Activated naive CD4-positive, alpha-beta T cell treated with anti-CD3 and anti-CD28 coated beads for 36 hours (primary cell): ENCODE measurements at regions of chr6 and their contacts with region 1.

Region 1: GRCh38 chr6:26568601-26569432 is 27.9 kb upstream of the ABT1 start:
- DNase-seq: peak; percentile 99
- H3K4me3 Mint-ChIP-seq: peak overlapping the region; percentile 95
- H3K27ac Mint-ChIP-seq: peak overlapping the region; percentile 91
- H3K4me1 Mint-ChIP-seq: peaks cover 33% of the 10 kb centered on the region
- H3K27me3 Mint-ChIP-seq: peaks cover 4% of the 10 kb centered on the region

Region 2: DNA sequence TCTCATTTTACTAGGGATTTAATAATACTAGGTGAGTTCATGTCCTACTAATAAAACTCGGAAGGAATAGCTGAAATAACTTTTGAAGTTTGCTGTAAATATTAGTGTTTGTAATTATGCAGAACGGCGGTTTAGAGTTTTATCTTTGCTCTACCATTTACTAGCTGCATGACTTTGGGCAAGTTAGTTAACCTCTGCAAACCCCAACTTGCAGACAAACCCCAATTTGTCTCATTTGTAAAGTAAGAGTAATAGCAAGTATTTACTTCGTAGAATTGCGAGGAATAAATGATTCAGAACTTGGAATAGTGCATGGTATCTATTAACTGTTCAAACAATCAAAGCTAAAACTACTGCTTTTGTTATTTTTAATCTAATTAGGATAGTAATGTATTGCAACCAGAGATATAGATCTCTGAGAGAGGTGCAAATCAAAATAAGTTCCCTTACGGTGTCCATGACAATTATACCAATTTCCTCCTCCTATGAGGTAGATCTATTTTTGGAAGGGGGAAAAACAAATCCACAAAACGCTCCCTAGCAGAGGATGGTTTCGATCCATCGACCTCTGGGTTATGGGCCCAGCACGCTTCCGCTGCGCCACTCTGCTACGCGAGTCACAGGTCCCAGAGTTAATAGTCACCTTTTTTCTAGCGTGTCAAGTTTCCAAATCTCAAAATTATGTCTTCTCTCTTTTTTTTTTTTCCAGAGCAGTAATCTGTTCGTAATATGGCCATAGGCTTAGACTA is 238.9 kb before region 1 on chr6:
- CTCF ChIA-PET with region 1: interaction called, 6 read pairs
- intact Hi-C with region 1: loop called (anchors 2 kb)
- DNase-seq: peak; percentile 81
- H3K4me3 Mint-ChIP-seq: peak overlapping the region; percentile 82
- H3K27ac Mint-ChIP-seq: peak overlapping the region; percentile 90
- H3K4me1 Mint-ChIP-seq: peaks cover 35% of the 10 kb centered on the region
- H3K27me3 Mint-ChIP-seq: peaks cover 28% of the 10 kb centered on the region

Region 3: DNA sequence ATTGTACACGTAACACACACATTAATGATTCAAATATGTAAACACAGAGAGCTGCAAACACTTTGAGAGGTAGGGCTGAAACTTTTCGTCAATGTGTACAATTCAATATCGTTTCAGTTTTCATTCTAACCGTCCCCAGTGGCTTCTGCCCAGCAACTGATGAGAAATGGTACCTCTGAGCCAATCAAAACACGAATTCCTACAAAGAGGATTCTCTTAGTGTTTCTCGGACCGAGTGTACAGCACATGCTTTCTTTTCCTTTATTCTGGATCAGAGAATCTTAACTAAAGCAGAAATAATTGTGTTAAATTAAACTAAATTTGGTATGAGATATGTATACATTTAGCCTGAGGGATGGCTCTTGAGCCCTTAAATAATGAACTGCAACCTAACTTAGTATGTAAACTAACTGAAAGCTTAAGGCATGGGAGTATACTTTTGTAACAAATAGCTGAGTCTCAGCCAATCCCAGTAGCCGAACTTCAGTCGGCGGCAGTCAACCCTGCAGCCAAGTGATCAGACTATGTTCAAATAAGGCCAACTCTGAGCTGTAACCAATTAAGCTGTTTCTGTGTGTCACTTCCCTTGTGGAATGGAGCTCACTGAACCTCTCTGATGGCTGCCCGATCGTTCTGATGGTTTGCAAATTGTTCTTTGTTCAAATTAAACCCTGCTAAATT is 94.9 kb before region 1 on chr6:
- CTCF ChIA-PET with region 1: interaction called, 4 read pairs
- intact Hi-C with region 1: loop called (anchors 1 kb)
- DNase-seq: peak; percentile 90
- H3K4me3 Mint-ChIP-seq: peak overlapping the region; percentile 98
- H3K27ac Mint-ChIP-seq: peak overlapping the region; percentile 100
- H3K4me1 Mint-ChIP-seq: peaks cover 40% of the 10 kb centered on the region
- H3K27me3 Mint-ChIP-seq: no peaks in the 10 kb centered on the region

Region 4: DNA sequence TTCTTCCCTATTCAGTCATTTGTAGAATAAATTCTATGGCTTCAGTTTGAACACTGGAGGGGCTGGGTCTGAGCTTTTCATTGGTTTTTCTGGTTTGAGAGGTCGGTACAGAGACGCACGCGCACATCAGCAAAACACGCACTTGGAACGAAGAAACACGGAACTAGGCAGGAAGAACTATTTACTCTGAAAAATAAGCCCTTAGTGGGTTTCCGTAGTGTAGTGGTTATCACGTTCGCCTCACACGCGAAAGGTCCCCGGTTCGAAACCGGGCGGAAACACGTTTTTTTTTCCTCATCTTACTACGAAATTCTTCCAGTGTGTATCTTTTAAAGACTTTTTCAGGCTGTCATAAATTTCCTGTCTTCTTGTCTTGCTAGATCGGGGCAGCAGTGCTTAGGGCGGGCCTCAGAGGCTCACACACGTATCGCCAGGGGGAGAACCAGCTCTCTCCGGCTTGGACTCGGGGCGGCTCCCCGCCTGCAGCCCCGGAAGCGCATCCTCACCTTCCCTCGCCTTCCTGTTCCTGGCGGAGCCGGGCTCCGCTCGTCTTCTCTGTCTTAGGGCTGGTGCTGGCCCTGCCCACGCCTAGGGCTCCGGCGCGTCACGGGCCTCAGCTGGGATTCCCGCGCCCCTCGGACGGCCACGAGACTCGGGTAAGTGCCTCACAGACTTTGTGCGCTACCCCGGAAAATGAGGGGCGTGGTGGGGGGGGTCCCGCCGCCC is 30.8 kb before region 1 on chr6 and contains the start of gene HMGN4:
- CTCF ChIA-PET with region 1: interaction called, 9 read pairs
- intact Hi-C with region 1: loop called (anchors 1 kb)
- DNase-seq: peak; percentile 82
- H3K4me3 Mint-ChIP-seq: peak within 1 kb of the TSS; percentile 87
- H3K27ac Mint-ChIP-seq: peak within 1 kb of the TSS; percentile 98
- H3K4me1 Mint-ChIP-seq: peaks cover 56% of the 10 kb centered on the region
- H3K27me3 Mint-ChIP-seq: no peaks in the 10 kb centered on the region
- total RNA-seq, gene HMGN4: 70.4 to 73.2 TPM

Region 5: GRCh38 chr6:26596579-26597388 is 28.0 kb after region 1 on chr6 and contains the start of gene ABT1:
- CTCF ChIA-PET with region 1: interaction called, 106 read pairs
- intact Hi-C with region 1: loop called (anchors 1 kb)
- DNase-seq: peak; percentile 99
- H3K4me3 Mint-ChIP-seq: no peak within 1 kb of the TSS
- H3K27ac Mint-ChIP-seq: no peak within 1 kb of the TSS
- H3K4me1 Mint-ChIP-seq: peaks cover 53% of the 10 kb centered on the region
- H3K27me3 Mint-ChIP-seq: peaks cover 24% of the 10 kb centered on the region
- total RNA-seq, gene ABT1: 17.3 to 18.4 TPM